Heart right ventricle (tissue), 16 donors: ENCODE measurements at regions of chr2 and their contacts with region 1.

Region 1: DNA sequence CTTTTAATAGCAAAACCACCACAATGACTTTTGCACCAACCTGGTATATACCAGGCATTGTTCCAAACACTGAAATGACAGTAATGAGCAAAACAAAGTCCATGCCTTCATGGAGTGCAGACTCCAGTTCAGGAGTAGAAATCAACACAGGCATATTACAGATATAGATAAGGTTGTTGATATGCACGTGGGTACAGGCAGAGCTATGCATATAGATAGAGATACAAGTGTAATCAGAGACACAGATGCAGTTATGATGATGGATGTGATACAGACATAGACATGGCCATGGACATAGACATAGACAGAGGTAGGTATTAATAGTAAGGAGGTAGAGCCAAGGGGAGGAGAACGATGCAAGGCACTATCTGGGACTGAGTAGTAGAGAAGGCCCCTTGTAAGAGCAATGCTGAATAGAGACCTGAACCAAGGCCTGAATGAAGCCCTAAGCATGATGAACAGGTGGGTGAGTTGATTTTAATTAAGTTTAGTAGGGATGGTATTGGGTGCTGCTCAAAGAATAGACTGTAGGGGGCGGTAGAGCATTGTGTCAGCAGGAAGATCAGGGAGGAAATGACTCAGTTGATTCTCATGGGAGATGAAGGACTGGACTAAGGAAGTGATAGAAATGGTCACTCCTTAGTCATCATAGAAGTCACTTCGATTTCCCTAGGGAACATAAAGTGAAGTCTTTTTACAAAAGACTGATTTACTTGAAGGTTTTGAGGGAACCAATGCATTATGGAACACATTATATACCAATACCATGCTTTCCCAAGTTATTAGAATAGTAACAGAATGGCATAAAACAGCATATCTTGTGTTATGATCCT is 39.4 kb downstream of the CMPK2 start:
- DNase-seq: peak in 1 of 2 donors; percentile 25
- ATAC-seq: peak; percentile 33 to 90 (median 70)
- H3K4me3 ChIP-seq: no peak overlapping the region
- H3K27ac ChIP-seq: peak overlapping the region in 1 of 10 donors; percentile 41
- H3K4me1 ChIP-seq: peaks cover 0 to 28% (median 8%) of the 10 kb centered on the region in 9 donors
- H3K27me3 ChIP-seq: no peaks in the 10 kb centered on the region
- CTCF ChIP-seq: peak; percentile 25 to 72 (median 60)

Region 2: DNA sequence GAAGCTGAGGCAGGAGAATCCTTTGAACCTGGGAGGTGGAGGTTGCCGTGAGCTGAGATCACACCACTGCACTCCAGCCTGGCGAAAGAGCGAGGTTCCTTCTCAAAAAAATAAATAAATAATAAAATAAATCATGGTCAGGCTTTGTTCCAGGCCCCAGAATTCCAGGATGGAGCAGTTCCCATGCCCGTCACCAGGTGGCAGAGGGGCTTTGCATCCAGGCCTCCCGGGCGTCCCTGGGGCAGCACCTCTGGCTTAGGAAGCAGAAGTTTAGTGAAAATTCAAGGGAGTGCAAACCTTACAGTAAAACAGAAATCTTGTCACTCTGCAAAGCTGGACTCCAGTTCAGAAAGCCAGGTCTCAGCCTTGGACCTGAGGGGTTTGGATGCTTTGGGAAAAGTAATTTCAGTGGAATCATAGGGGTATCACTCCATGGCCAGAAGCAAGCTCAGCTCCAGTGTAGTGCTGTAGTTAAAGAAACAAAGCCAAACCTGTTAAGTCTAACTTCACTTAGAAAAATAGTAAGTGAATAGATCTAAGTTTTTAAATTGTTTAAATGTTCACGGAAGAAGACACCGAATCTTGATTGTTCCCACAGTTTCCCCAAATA is 473.3 kb before region 1 on chr2:
- intact Hi-C with region 1: loop called in 1 of 10 experiments (anchors 5 kb)
- DNase-seq: peak; percentile 22 to 42
- ATAC-seq: peak in 1 of 8 donors; percentile 51
- H3K4me3 ChIP-seq: no peak overlapping the region
- H3K27ac ChIP-seq: no peak overlapping the region
- H3K4me1 ChIP-seq: no peaks in the 10 kb centered on the region
- H3K27me3 ChIP-seq: no peaks in the 10 kb centered on the region
- CTCF ChIP-seq: peak; percentile 33 to 73 (median 65)

Region 3: GRCh38 chr2:6721380-6721779 is 104.9 kb before region 1 on chr2:
- intact Hi-C with region 1: no loop called
- DNase-seq: no peak
- ATAC-seq: no peak
- H3K4me3 ChIP-seq: no peak overlapping the region
- H3K27ac ChIP-seq: no peak overlapping the region
- H3K4me1 ChIP-seq: no peaks in the 10 kb centered on the region
- H3K27me3 ChIP-seq: peaks cover 0 to 4% (median 0%) of the 10 kb centered on the region in 7 donors
- CTCF ChIP-seq: no peak

Region 4: DNA sequence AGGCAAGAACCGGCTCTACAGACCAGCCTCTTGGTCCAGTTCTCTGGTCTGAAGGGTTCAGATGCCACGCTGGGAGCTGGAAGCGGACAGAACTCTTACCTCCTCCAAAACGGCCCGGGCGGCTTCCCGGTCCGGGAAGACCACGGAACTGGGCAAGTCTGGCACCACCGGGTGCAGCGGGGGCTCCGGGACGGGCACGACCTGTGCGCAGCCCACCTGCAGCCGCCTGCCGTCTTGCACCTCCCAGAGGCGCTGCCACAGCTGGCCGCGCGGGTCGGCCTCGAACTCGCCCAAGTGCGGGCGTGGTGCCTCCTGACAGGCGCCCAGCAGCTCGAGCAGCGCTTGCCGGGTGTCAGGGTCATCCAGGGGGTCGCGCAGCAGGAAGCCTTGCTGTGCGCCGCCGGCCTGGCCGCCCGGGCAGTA is 38.6 kb after region 1 on chr2:
- intact Hi-C with region 1: loop called in 1 of 10 experiments (anchors 5 kb)
- DNase-seq: peak in 1 of 2 donors; percentile 53
- ATAC-seq: peak in 1 of 8 donors; percentile 4
- H3K4me3 ChIP-seq: peak overlapping the region; percentile 54 to 97 (median 81)
- H3K27ac ChIP-seq: peak overlapping the region; percentile 79 to 99 (median 92)
- H3K4me1 ChIP-seq: peaks cover 0 to 37% (median 33%) of the 10 kb centered on the region in 9 donors
- H3K27me3 ChIP-seq: no peaks in the 10 kb centered on the region
- CTCF ChIP-seq: no peak